WTC11 (cell line): ENCODE measurements at regions of chr2 and their contacts with region 1.

Region 1: GRCh38 chr2:173402405-173402974 is 47.8 kb downstream of the CDCA7 start:
- DNase-seq: peak; percentile 84
- ATAC-seq: peak; percentile 92
- H3K4me3 Mint-ChIP-seq: peak overlapping the region; percentile 72
- H3K27ac Mint-ChIP-seq: no peak overlapping the region
- H3K4me1 Mint-ChIP-seq: peaks cover 33% of the 10 kb centered on the region
- H3K27me3 Mint-ChIP-seq: peaks cover 3% of the 10 kb centered on the region
- CTCF ChIP-seq: peak; percentile 76

Region 2: GRCh38 chr2:173427887-173428600 is 25.6 kb after region 1 on chr2:
- CTCF ChIA-PET with region 1: no interaction called
- POLR2A ChIA-PET with region 1: no interaction called
- DNase-seq: no peak
- ATAC-seq: no peak
- H3K4me3 Mint-ChIP-seq: no peak overlapping the region
- H3K27ac Mint-ChIP-seq: no peak overlapping the region
- H3K4me1 Mint-ChIP-seq: peaks cover under 1% of the 10 kb centered on the region
- H3K27me3 Mint-ChIP-seq: no peaks in the 10 kb centered on the region
- CTCF ChIP-seq: no peak

Region 3: GRCh38 chr2:173483137-173483536 is 80.6 kb after region 1 on chr2:
- CTCF ChIA-PET with region 1: no interaction called
- POLR2A ChIA-PET with region 1: no interaction called
- DNase-seq: no peak
- ATAC-seq: no peak
- H3K4me3 Mint-ChIP-seq: no peak overlapping the region
- H3K27ac Mint-ChIP-seq: no peak overlapping the region
- H3K4me1 Mint-ChIP-seq: no peaks in the 10 kb centered on the region
- H3K27me3 Mint-ChIP-seq: no peaks in the 10 kb centered on the region
- CTCF ChIP-seq: no peak

Region 4: DNA sequence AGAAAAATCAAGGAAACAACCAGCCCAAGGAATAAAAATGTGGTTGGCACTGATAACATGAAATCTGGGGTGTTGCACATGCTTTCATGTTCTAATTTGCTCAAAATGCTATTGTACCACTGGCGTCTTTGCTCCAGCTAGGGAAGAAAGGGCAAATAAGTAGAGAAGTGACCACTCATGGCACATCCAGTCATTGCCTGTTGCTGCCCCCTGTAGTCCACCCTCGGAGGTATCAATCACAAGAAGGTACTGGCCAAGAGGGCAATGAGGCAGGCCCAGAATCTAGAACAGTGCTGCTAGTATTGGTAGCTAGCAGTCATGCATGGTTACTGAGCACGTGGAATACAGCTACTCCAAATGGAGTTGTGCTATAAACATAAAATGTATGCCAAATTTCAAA is 165.6 kb after region 1 on chr2:
- CTCF ChIA-PET with region 1: interaction called, 51 read pairs
- POLR2A ChIA-PET with region 1: no interaction called
- DNase-seq: peak; percentile 70
- ATAC-seq: peak; percentile 83
- H3K4me3 Mint-ChIP-seq: no peak overlapping the region
- H3K27ac Mint-ChIP-seq: no peak overlapping the region
- H3K4me1 Mint-ChIP-seq: peaks cover 30% of the 10 kb centered on the region
- H3K27me3 Mint-ChIP-seq: no peaks in the 10 kb centered on the region
- CTCF ChIP-seq: no peak

Region 5: DNA sequence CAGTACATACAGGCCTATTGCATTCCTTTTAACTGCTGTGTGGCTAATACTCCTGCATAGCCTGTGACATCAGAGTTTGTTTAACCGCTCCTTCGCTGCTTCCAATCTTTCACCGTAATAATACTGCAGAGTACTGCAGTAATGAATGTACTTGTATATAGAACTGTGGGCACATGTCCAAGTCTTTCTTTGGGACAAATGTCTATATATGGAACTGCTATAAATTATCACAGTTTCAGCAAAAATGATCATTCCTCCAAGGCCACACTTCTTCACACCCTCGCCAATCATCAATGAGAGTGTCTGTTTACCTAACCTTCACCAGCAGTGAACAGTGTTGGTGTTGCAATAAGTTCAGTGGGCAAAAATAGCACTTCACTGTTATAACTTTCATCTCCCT is 332.3 kb after region 1 on chr2:
- CTCF ChIA-PET with region 1: no interaction called
- POLR2A ChIA-PET with region 1: no interaction called
- DNase-seq: no peak
- ATAC-seq: no peak
- H3K4me3 Mint-ChIP-seq: no peak overlapping the region
- H3K27ac Mint-ChIP-seq: no peak overlapping the region
- H3K4me1 Mint-ChIP-seq: no peaks in the 10 kb centered on the region
- H3K27me3 Mint-ChIP-seq: no peaks in the 10 kb centered on the region; the same call in 1 of the 2 replicates
- CTCF ChIP-seq: no peak